Left cardiac atrium (tissue), 4 donors: ENCODE measurements at regions of chr12 and their contacts with region 1.

Region 1: DNA sequence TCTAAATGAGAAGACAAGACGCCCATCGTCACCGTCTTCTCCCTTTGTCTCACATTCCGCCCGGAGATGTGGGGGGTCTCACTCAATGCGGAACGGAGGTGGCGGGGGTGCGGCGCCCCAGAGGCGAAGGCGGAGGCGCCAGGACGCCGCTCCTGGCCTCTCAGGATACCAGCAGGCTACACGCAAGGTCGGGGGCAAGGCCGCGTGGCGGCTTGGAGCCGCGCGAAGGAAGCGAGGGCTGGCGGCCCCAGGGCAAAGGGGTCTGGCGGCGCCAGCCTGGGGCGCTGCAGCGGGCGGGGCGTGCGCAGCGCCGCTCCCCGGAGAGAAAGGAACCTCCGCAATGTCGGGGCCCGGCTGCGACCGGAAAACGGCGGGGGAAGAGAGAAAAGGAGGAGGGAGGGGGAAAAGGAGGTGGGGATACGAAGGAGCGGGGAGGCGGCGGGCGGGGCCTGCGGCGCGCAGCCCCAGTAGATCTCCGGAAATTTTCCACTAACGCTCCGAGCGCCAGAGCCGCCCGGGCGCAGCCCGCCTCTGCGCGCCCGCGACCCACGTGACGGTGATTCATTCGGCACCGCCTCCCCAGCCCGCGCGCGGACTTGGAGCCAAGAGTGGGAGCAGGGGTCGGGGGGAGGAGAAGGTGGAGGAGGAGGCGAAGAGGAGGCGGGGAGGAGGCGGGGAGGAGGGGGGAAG is 10.5 kb upstream of the SLC38A2 start:
- DNase-seq: peak; percentile 97
- ATAC-seq: peak; percentile 94

Region 2: DNA sequence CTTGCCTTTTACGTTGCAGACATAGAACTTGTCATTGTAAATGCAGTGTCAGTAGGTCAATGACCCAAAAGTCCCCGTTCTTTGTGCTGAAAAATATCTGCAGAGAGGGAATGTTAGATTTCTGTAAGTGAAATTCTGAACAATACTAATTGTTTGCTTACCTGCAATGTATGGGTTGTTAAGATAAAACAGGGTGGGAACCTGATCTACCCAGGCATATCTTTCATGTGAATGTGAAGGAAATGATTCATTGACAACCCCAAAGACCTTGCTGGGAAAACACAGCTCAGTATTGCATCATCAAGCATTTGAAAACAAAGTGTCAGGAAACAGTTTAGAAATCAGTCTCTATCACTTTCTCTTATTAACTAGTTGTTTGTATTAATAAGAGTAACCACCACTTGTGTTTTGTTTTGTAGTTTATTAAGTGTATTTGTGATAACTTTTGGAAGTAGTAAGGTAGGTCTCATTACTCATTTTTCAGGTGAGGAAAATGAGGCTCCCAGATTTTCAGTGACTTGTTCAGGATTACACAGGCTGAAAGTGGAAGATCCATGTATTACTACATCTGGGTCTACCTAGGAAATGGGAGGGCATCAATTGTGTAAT is 47.3 kb after region 1 on chr12:
- intact Hi-C with region 1: loop called in 1 of 2 experiments (anchors 10 kb)
- DNase-seq: no peak
- ATAC-seq: peak; percentile 56 to 88

Region 3: GRCh38 chr12:46473634-46474329 is 90.7 kb after region 1 on chr12:
- intact Hi-C with region 1: loop called in 1 of 2 experiments (anchors 5 kb)
- DNase-seq: peak; percentile 80
- ATAC-seq: peak; percentile 90 to 96